ENCODE measurements at regions of chr1 and their contacts with region 1.

Region 1: DNA sequence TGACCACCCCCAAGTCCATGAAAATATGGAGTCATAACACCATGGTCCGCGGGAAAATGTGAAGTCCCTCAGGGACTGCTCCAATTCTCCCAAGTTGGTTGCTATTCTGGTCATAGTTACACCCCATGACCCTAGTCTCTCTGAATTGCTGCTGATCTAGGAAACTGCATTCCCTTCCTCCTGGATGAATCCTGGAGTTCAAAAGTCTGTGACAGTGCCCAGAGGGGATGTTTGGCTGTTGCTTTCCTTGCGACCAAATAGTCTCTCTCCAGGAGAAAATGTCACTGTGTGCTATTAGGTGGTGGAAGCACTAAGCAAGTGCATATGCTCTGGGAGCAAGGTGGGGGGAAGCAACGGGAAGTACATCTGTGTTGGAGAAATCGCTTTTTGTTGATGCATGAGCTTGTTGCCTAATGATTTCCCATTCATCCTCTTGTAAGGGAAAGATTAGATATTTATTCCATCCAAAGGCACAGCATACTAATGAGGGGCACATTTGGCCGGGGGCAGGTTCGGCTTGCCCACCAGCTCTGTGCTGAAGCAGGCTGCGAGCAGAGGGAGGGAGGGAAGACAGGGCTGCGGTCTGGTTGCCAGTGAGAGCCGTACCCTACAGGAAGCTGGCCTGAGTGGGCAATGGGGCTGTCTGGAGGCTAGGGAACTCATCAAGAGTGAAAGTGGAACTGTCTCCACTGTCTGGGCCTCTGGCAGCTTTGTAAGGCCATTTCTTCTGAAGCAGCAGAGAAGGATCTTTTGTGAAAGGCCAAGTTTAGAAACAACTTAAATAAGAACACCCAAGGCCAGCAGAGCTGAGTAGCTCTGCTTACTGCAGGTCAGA is 27.2 kb downstream of the SYT6 start:
- DNase-seq: no peak
- H3K4me3 ChIP-seq: no peak overlapping the region
- H3K4me1 ChIP-seq: no peaks in the 10 kb centered on the region
- H3K27me3 ChIP-seq: no peaks in the 10 kb centered on the region

Region 2: DNA sequence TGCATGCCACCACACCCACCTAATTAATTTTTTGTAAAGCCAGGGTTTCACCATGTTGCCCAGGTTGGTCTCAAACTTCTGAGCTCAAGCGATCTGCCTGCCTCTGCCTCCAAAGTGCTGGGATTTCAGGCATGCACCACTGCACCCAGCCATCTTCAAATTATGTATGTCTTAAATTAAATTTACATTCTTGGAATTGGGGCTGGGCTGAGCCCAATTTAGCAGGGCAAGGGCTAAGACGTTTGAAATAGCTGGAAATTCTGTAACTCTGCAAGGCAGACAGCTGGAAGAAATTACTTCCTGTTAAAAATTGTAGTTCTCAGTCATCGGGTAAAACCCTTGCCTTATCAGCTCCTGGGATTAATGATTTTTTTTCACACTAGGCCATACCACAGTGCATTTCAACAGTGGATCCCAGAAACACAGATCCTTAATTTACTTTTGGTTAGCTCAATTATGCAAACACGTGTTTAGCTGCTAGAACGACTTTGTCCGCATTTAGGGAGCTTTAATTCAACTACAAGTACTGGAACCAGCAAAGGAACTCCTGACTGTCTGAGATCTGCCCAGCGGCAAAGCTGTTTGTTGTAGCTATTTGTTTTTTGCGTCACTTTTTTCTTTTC is 63.9 kb before region 1 on chr1:
- in situ Hi-C with region 1: loop called (anchors 10 kb)
- DNase-seq: no peak
- H3K4me3 ChIP-seq: no peak overlapping the region
- H3K4me1 ChIP-seq: peaks cover 19% of the 10 kb centered on the region
- H3K27me3 ChIP-seq: no peaks in the 10 kb centered on the region

Measured in HAP-1 (cell line).